ENCODE measurements at regions of chr5 and their contacts with region 1.

Region 1: DNA sequence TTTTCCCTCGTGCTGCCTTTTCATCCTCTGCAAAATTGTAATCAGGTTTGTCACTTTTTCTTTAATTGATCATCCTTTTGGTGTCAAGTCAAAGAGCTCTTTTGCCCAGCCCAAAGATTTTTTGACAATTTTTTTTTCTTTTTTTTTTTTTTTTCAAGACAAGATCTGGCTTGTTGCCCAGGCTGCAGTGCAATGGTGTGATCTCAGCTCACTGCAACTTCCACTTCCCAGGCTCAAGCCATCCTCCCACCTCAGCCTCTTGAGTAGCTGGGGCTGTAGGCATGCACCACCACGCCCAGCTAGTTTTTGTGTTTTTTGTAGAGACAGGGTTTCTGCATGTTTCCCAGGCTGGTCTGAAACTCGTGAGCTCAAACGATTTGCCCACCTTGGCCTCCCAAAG is 36.7 kb downstream of the CDK7 start:
- DNase-seq: no peak
- CTCF ChIP-seq: no peak

Region 2: GRCh38 chr5:69257577-69257976 is 13.8 kb before region 1 on chr5:
- CTCF ChIA-PET with region 1: interaction called, 10 read pairs
- POLR2A ChIA-PET with region 1: no interaction called
- DNase-seq: no peak
- CTCF ChIP-seq: no peak